Heart left ventricle (tissue), 16 donors: ENCODE measurements at regions of chrX and their contacts with region 1.

Region 1: DNA sequence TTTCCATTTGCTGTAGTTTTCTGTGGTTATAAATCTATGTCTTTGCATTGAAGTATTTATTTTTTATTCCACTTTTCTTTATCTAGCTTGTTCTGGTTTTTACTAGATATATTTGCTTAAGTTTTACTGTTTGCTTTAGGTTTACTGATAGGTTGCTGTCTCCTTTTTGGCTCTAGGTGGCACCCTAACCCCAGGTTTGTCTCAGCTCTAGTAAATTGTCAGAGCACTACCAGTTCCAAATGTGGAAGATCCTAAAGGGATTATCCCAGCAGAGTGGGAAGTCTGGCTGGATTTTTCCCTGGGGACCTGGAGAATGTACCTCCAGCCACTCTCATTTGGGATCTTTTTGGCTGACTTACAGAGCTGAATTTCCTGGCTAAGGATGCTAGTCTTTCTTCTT is 106.1 kb downstream of the PBDC1 start:
- DNase-seq: peak in 3 of 5 donors; percentile 10 to 32 (median 21)
- ATAC-seq: peak in 1 of 4 donors; percentile 57
- H3K4me3 ChIP-seq: no peak overlapping the region
- H3K27ac ChIP-seq: no peak overlapping the region
- H3K4me1 ChIP-seq: no peaks in the 10 kb centered on the region
- H3K27me3 ChIP-seq: no peaks in the 10 kb centered on the region
- CTCF ChIP-seq: peak; percentile 17 to 64 (median 56)
- POLR2A ChIP-seq: no peak

Region 2: GRCh38 chrX:76195579-76195978 is 83.4 kb before region 1 on chrX:
- intact Hi-C with region 1: no loop called
- DNase-seq: no peak
- ATAC-seq: no peak
- H3K4me3 ChIP-seq: no peak overlapping the region
- H3K27ac ChIP-seq: no peak overlapping the region
- H3K4me1 ChIP-seq: no peaks in the 10 kb centered on the region
- H3K27me3 ChIP-seq: peaks cover 0 to 2% (median 0%) of the 10 kb centered on the region in 9 donors
- CTCF ChIP-seq: no peak
- POLR2A ChIP-seq: no peak

Region 3: DNA sequence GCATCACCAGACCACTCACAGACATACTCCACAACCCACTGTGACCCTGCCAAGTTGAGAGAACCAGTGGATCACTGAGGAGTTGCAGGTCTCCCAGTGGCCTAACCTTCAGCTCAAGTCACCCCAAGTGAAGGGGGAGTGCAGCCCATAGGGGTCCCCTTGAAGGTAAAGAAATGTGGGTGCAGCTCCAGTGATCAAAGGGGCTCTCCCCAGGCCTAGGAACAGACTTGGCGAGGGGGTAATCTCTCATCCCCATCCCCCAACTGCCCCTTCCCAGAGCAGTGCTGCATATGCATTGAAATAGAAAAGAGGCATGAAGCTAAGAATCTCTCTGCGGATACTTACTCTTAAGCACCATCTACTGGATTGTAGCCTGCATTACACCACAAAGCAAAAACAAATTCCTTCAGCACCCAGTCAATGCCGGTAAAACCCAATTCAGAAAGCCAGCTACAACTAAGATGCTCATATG is 175.5 kb after region 1 on chrX:
- intact Hi-C with region 1: loop called in 9 of 10 experiments (anchors 2 to 10 kb)
- DNase-seq: no peak
- ATAC-seq: peak in 2 of 4 donors; percentile 45 to 46
- H3K4me3 ChIP-seq: no peak overlapping the region
- H3K27ac ChIP-seq: no peak overlapping the region
- H3K4me1 ChIP-seq: no peaks in the 10 kb centered on the region
- H3K27me3 ChIP-seq: no peaks in the 10 kb centered on the region
- CTCF ChIP-seq: peak; percentile 20 to 56 (median 47)
- POLR2A ChIP-seq: no peak

Region 4: DNA sequence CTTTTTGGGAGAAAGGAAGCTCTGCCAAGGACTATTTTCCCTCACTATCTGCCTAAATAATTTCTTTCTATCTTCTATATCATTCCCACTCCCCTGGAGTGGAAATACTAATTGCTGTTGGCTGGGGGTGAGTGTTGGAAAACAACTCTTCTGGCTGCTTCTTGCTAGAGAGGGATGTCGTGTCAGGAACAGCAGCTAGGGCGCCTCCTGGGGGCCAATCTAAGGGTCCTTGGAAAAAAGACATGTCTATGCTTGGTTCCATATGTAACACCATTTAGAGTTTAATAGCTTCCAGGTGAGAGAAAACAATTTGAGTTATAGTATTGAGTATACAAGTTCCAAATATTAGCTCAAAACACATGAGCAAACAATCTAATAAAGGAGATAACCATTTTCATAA is 259.9 kb after region 1 on chrX:
- intact Hi-C with region 1: no loop called
- DNase-seq: no peak
- ATAC-seq: no peak
- H3K4me3 ChIP-seq: no peak overlapping the region
- H3K27ac ChIP-seq: no peak overlapping the region
- H3K4me1 ChIP-seq: no peaks in the 10 kb centered on the region
- H3K27me3 ChIP-seq: no peaks in the 10 kb centered on the region
- CTCF ChIP-seq: no peak
- POLR2A ChIP-seq: no peak